WTC11 (cell line): ENCODE measurements at regions of chr6 and their contacts with region 1.

Region 1: DNA sequence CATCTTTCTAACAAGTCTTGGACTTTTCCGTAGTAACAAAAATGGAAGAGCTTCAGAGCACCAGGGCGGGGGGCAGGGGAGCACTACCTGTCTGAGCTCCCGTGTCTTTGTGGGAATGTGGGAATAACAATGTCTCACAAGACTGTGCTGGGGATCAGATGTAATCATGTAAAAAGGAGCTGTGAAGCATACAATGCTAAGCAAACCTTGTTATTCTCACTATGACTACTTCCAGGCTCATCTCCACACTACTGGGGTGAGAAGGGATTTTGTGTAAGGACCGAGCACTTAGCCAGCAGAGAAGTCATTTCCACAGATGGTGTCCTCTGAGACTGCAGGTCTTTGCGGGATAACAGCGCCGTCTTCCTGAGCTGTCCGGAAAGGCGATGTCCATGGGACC is 27.1 kb downstream of the PRR18 start:
- DNase-seq: no peak
- ATAC-seq: no peak
- H3K4me3 Mint-ChIP-seq: no peak overlapping the region
- H3K27ac Mint-ChIP-seq: no peak overlapping the region
- H3K4me1 Mint-ChIP-seq: no peaks in the 10 kb centered on the region
- H3K27me3 Mint-ChIP-seq: peaks cover 6% of the 10 kb centered on the region
- CTCF ChIP-seq: no peak

Region 2: GRCh38 chr6:166313255-166314070 is 32.4 kb after region 1 on chr6:
- CTCF ChIA-PET with region 1: interaction called, 11 read pairs
- POLR2A ChIA-PET with region 1: no interaction called
- DNase-seq: peak; percentile 67
- ATAC-seq: peak; percentile 80
- H3K4me3 Mint-ChIP-seq: no peak overlapping the region
- H3K27ac Mint-ChIP-seq: no peak overlapping the region
- H3K4me1 Mint-ChIP-seq: peaks cover 18% of the 10 kb centered on the region
- H3K27me3 Mint-ChIP-seq: peaks cover 25% of the 10 kb centered on the region
- CTCF ChIP-seq: peak; percentile 37; the same call in 1 of the 2 replicates